Spleen (tissue), 13 donors: ENCODE measurements at regions of chr10 and their contacts with region 1.

Region 1: DNA sequence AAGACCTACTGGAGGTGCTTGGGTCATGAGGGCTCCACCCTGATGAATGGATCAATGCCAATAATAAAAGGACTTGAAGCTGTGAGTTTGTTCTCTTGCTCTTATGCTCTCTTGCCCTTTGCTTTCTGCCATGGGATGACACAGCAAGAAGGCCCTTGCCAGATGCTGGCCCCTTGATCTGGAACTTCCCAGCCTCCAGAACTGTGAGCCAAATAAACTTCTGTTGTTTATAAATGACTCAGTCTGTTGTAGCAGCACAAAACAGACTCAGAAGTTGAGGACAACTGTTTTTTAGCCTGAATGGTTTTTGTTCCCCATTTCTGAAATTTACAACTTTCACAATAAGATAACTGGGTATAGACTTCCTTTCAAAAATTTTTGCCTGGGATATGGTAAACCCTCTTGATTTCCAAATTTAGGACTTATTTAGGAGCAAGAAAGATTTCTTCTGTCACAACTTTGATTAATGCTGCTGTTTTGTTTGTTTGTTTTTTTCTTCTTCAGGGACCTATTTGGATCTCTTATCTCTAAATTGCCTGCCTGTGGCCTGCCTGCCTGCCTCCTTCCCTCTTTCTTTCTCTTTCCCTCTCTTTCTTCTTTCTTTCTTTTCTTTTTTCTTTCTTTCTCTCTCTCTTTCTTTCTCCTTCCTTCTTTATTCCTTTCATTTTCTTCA is 12.1 kb downstream of the ENTPD1 start:
- DNase-seq: no peak
- H3K4me3 ChIP-seq: peak overlapping the region in 1 of 8 donors; percentile 19
- H3K27ac ChIP-seq: peak overlapping the region in 7 of 8 donors; percentile 60 to 87 (median 79)
- H3K4me1 ChIP-seq: peaks cover 0 to 73% (median 25%) of the 10 kb centered on the region in 6 donors
- H3K27me3 ChIP-seq: no peaks in the 10 kb centered on the region
- CTCF ChIP-seq: no peak
- POLR2A ChIP-seq: no peak

Region 2: GRCh38 chr10:95832216-95833041 is 64.4 kb after region 1 on chr10:
- intact Hi-C with region 1: loop called (anchors 10 kb)
- DNase-seq: peak; percentile 77
- H3K4me3 ChIP-seq: no peak overlapping the region
- H3K27ac ChIP-seq: peak overlapping the region; percentile 54 to 88 (median 78)
- H3K4me1 ChIP-seq: peaks cover 13 to 83% (median 37%) of the 10 kb centered on the region in 6 donors
- H3K27me3 ChIP-seq: no peaks in the 10 kb centered on the region
- CTCF ChIP-seq: no peak
- POLR2A ChIP-seq: peak in 1 of 3 donors; percentile 73